ENCODE measurements at regions of chrX and their contacts with region 1.

Region 1: GRCh38 chrX:70769659-70770232 is 138.8 kb downstream of the TEX11 start:
- DNase-seq: no peak
- ATAC-seq: peak; percentile 34; the same call in 1 of the 2 replicates
- H3K4me3 ChIP-seq: no peak overlapping the region
- H3K27ac ChIP-seq: no peak overlapping the region
- H3K4me1 ChIP-seq: no peaks in the 10 kb centered on the region
- H3K27me3 ChIP-seq: no peaks in the 10 kb centered on the region
- CTCF ChIP-seq: peak in 2 of 3 experiments; percentile 37 to 44; a peak in 2 of 6 replicates
- POLR2A ChIP-seq: no peak
- RAD21 ChIP-seq: peak; percentile 57

Region 2: GRCh38 chrX:70960728-70961127 is 191.0 kb after region 1 on chrX:
- CTCF ChIA-PET with region 1: interaction called, 17 read pairs
- POLR2A ChIA-PET with region 1: no interaction called
- RAD21 ChIA-PET with region 1: interaction called in 1 of 2 experiments, 6 read pairs
- intact Hi-C with region 1: loop called (anchors 1 kb)
- DNase-seq: no peak
- ATAC-seq: no peak
- H3K4me3 ChIP-seq: no peak overlapping the region
- H3K27ac ChIP-seq: no peak overlapping the region
- H3K4me1 ChIP-seq: no peaks in the 10 kb centered on the region
- H3K27me3 ChIP-seq: no peaks in the 10 kb centered on the region
- CTCF ChIP-seq: peak in 2 of 3 experiments; percentile 30 to 31; a peak in 2 of 6 replicates
- POLR2A ChIP-seq: no peak
- RAD21 ChIP-seq: peak; percentile 61

Region 3: GRCh38 chrX:70970482-70970995 is 200.8 kb after region 1 on chrX:
- CTCF ChIA-PET with region 1: interaction called, 13 read pairs
- POLR2A ChIA-PET with region 1: interaction called, 3 read pairs
- RAD21 ChIA-PET with region 1: no interaction called
- intact Hi-C with region 1: no loop called
- DNase-seq: no peak
- ATAC-seq: peak; percentile 73
- H3K4me3 ChIP-seq: peak overlapping the region; percentile 19 to 40
- H3K27ac ChIP-seq: no peak overlapping the region
- H3K4me1 ChIP-seq: peaks cover 0 to 10% of the 10 kb centered on the region in 2 experiments; a peak in 3 of 4 replicates
- H3K27me3 ChIP-seq: no peaks in the 10 kb centered on the region
- CTCF ChIP-seq: peak; percentile 17 to 51 (median 44); a peak in 4 of 6 replicates
- POLR2A ChIP-seq: no peak
- RAD21 ChIP-seq: peak; percentile 55

Measured in HCT116 (cell line).